ENCODE measurements at regions of chr11 and their contacts with region 1.

Region 1: DNA sequence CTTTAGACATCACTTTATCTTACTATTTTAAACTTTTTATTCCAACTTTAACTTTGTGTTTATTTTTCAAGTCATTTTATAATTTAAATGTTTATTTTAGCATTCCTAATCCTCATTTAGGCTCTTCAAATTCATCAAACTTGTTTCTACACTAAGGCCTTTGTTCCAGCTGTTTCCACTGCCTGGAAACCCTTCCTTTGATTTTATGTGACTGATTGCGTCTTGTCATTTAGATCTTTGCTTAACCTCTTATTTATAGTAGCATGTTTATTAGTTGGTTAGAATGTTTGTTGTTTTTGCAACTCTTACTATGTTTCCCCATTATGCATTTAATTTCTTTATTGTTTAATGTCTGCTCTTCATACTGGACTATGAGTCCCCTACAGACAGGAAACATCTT is 132.0 kb downstream of the FAM181B start:
- DNase-seq: no peak
- H3K4me3 ChIP-seq: no peak overlapping the region
- H3K27ac ChIP-seq: no peak overlapping the region
- H3K4me1 ChIP-seq: no peaks in the 10 kb centered on the region
- CTCF ChIP-seq: no peak

Region 2: DNA sequence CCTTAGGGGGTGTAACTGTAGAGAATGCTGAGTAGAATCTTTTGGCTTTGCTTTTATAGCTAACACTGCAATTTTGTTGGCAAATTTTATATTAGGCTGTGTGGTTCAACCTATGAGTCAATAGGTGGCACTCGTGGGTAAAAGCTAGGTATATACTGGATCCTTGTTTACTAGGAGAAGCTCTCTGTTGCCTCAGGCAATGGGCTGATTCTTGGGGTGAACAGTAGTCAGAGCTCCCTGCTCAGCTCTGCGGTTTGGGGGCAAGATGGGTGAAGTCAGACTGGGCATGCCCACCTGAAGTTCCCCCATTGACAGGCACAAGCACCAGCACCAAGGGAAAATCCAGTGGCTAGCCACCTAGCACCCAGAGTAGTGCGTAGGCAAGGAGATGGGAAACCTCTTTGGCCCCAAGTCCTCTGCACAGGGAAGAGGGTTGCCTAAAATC is 106.7 kb before region 1 on chr11:
- CTCF ChIA-PET with region 1: no interaction called
- POLR2A ChIA-PET with region 1: no interaction called
- intact Hi-C with region 1: loop called (anchors 10 kb)
- DNase-seq: peak; percentile 29
- H3K4me3 ChIP-seq: no peak overlapping the region
- H3K27ac ChIP-seq: no peak overlapping the region
- H3K4me1 ChIP-seq: no peaks in the 10 kb centered on the region
- CTCF ChIP-seq: peak; percentile 71

Region 3: GRCh38 chr11:82539669-82540068 is 62.0 kb before region 1 on chr11:
- CTCF ChIA-PET with region 1: no interaction called
- POLR2A ChIA-PET with region 1: no interaction called
- intact Hi-C with region 1: loop called (anchors 10 kb)
- DNase-seq: no peak
- H3K4me3 ChIP-seq: no peak overlapping the region
- H3K27ac ChIP-seq: no peak overlapping the region
- H3K4me1 ChIP-seq: no peaks in the 10 kb centered on the region
- CTCF ChIP-seq: no peak